ENCODE measurements at regions of chr9 and their contacts with region 1.

Region 1: GRCh38 chr9:38447703-38448102 is 23.4 kb upstream of the IGFBPL1 start:
- DNase-seq: no peak
- ATAC-seq: no peak
- H3K4me3 Mint-ChIP-seq: no peak overlapping the region
- H3K27ac Mint-ChIP-seq: no peak overlapping the region
- H3K4me1 Mint-ChIP-seq: peaks cover 2% of the 10 kb centered on the region
- H3K27me3 Mint-ChIP-seq: peaks cover 19% of the 10 kb centered on the region

Region 2: DNA sequence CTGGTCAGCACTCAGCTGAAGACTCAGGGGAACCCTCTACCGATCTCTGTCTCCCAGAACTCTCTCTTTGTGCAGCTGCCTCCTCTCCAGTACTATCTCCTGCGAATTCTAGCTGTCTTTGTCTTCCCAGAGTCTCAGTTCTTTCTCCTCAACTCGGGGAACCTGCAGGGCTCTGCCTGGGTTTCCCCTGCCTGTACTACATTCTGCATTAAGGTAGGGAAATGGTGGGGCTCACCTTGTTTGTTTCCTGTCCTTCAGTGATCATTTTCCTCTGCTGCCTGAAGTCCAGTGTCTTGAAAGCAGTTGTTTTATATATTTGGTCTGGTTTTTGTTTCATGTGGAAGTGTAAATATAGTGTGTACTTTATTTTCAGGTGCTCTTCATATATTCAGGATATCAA is 19.7 kb after region 1 on chr9:
- CTCF ChIA-PET with region 1: no interaction called
- POLR2A ChIA-PET with region 1: no interaction called
- intact Hi-C with region 1: loop called in 1 of 2 experiments (anchors 2 kb)
- DNase-seq: no peak
- ATAC-seq: no peak
- H3K4me3 Mint-ChIP-seq: no peak overlapping the region
- H3K27ac Mint-ChIP-seq: no peak overlapping the region
- H3K4me1 Mint-ChIP-seq: no peaks in the 10 kb centered on the region
- H3K27me3 Mint-ChIP-seq: peaks cover 2% of the 10 kb centered on the region

Region 3: GRCh38 chr9:38489057-38489456 is 41.4 kb after region 1 on chr9:
- CTCF ChIA-PET with region 1: no interaction called
- POLR2A ChIA-PET with region 1: no interaction called
- intact Hi-C with region 1: no loop called
- DNase-seq: no peak
- ATAC-seq: no peak
- H3K4me3 Mint-ChIP-seq: no peak overlapping the region
- H3K27ac Mint-ChIP-seq: no peak overlapping the region
- H3K4me1 Mint-ChIP-seq: no peaks in the 10 kb centered on the region
- H3K27me3 Mint-ChIP-seq: peaks cover 2% of the 10 kb centered on the region

Measured in activated CD4-positive, alpha-beta T cell treated with anti-CD3 and anti-CD28 coated beads for 36 hours (primary cell).